PC-3 (cell line): ENCODE measurements at regions of chr18 and their contacts with region 1.

Region 1: GRCh38 chr18:3511922-3512372 is 62.0 kb downstream of the TGIF1 start:
- DNase-seq: peak; percentile 82
- ATAC-seq: peak; percentile 70
- H3K4me3 ChIP-seq: no peak overlapping the region
- H3K27ac ChIP-seq: no peak overlapping the region
- H3K4me1 ChIP-seq: peaks cover 20% of the 10 kb centered on the region
- H3K27me3 ChIP-seq: no peaks in the 10 kb centered on the region
- CTCF ChIP-seq: no peak

Region 2: DNA sequence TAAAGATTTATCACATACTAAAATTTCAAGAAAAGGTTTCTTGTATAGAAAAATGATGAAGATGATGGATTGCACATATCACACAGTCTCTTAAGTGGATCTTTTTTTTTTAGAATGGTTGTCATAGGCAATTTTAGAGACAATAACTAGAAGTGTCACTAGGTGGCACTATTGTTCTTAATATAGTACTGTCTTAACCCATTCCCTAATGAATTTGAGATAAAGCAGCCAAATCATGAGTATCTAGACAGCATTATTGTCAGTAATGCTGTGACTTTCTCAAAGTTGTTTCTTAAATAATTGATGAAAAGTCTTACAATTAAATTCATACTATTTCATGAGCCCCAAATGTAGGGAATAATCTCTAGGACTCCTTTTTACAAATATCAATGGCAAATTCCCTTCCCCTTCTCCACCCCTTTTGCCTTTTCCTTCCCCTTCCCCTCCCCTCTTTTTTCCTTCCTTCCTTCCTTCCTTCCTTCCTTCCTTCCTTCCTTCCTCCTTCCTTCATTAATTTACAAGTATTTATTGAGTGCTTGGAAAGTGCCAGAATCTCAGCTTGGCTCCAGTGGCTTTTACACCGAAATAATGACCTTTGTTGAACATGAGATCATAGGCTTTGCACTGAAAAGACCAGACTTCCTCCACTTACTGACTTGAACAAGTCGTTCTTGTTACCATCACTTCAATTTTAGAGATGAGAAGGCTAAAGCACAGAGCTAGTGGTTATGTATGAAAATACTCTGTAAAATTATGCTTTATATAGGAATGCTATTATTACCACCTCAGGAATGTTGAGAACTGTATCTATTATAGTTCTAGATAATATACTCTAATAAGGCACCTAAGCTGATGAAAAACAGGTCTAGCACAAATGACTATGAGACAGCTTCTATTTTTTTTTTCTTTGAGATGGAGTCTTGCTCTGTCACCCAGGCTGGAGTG is 230.2 kb before region 1 on chr18:
- CTCF ChIA-PET with region 1: no interaction called
- POLR2A ChIA-PET with region 1: no interaction called
- intact Hi-C with region 1: loop called (anchors 5 kb)
- DNase-seq: peak; percentile 96
- ATAC-seq: peak; percentile 64
- H3K4me3 ChIP-seq: no peak overlapping the region
- H3K27ac ChIP-seq: no peak overlapping the region
- H3K4me1 ChIP-seq: peaks cover 27% of the 10 kb centered on the region
- H3K27me3 ChIP-seq: no peaks in the 10 kb centered on the region
- CTCF ChIP-seq: peak; percentile 87

Region 3: DNA sequence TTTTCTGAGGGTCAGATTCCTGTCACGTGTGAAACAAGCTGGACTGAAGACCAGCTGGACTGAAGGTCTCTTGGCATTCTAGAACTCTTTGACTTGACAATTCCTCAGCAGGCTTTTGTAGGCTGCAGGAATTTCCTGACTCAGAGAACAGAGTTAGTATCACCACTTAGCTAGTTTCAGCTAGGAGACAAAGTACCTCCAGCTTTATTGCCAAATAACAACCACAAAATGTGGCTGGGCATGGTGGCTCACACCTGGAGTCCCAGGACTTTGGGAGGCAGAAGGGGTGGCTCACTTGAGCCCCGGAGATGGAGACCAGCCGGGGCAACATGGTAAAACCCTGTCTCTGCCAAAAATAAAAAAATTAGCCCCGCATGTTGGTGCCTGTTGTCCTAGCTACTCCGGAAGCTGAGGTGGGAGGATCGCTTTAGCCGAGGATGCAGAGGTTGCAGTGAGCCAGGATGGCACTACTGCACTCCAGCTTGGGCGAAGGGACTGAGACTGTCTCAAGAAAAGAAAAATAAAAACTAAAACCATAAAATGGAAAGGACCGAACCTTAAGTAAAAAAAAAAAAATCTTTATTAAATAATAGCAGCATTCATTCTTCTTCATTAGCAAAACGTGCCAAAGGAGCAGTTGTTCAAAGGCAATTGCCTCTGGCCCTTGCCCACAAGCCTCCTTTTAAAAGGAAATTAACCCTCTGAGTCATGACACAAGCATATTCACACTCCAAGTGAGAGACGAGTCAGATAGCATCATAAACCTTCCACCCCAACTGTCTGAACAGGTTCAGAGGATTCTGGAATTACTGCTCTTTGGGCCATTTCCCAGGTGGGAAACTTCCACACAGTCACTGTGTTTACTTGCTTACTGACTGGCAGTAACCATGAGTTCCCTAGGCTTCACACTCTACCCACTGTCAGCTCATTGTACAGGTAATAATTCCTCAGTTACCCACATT is 161.1 kb before region 1 on chr18:
- CTCF ChIA-PET with region 1: no interaction called
- POLR2A ChIA-PET with region 1: no interaction called
- intact Hi-C with region 1: no loop called
- DNase-seq: peak; percentile 76
- ATAC-seq: peak; percentile 94
- H3K4me3 ChIP-seq: no peak overlapping the region
- H3K27ac ChIP-seq: no peak overlapping the region
- H3K4me1 ChIP-seq: peaks cover 10% of the 10 kb centered on the region
- H3K27me3 ChIP-seq: no peaks in the 10 kb centered on the region
- CTCF ChIP-seq: no peak

Region 4: GRCh38 chr18:3392467-3392855 is 119.5 kb before region 1 on chr18:
- CTCF ChIA-PET with region 1: no interaction called
- POLR2A ChIA-PET with region 1: interaction called, 11 read pairs
- intact Hi-C with region 1: no loop called
- DNase-seq: no peak
- ATAC-seq: no peak
- H3K4me3 ChIP-seq: no peak overlapping the region
- H3K27ac ChIP-seq: no peak overlapping the region
- H3K4me1 ChIP-seq: peaks cover 18% of the 10 kb centered on the region
- H3K27me3 ChIP-seq: no peaks in the 10 kb centered on the region
- CTCF ChIP-seq: no peak

Region 5: GRCh38 chr18:3424280-3424890 is 87.6 kb before region 1 on chr18:
- CTCF ChIA-PET with region 1: no interaction called
- POLR2A ChIA-PET with region 1: no interaction called
- intact Hi-C with region 1: no loop called
- DNase-seq: no peak
- ATAC-seq: no peak
- H3K4me3 ChIP-seq: no peak overlapping the region
- H3K27ac ChIP-seq: no peak overlapping the region
- H3K4me1 ChIP-seq: no peaks in the 10 kb centered on the region
- H3K27me3 ChIP-seq: no peaks in the 10 kb centered on the region
- CTCF ChIP-seq: no peak

Region 6: GRCh38 chr18:3593904-3594661 is 82.1 kb after region 1 on chr18:
- CTCF ChIA-PET with region 1: interaction called, 3 read pairs
- POLR2A ChIA-PET with region 1: no interaction called
- intact Hi-C with region 1: loop called (anchors 2 kb)
- DNase-seq: peak; percentile 94
- ATAC-seq: peak; percentile 50
- H3K4me3 ChIP-seq: peak overlapping the region; percentile 60
- H3K27ac ChIP-seq: peak overlapping the region; percentile 99
- H3K4me1 ChIP-seq: peaks cover 45% of the 10 kb centered on the region
- H3K27me3 ChIP-seq: no peaks in the 10 kb centered on the region
- CTCF ChIP-seq: peak; percentile 81

Region 7: GRCh38 chr18:3623769-3624545 is 112.0 kb after region 1 on chr18:
- CTCF ChIA-PET with region 1: no interaction called
- POLR2A ChIA-PET with region 1: no interaction called
- intact Hi-C with region 1: loop called (anchors 1 kb)
- DNase-seq: peak; percentile 98
- ATAC-seq: peak; percentile 81
- H3K4me3 ChIP-seq: peak overlapping the region; percentile 53
- H3K27ac ChIP-seq: peak overlapping the region; percentile 98
- H3K4me1 ChIP-seq: peaks cover 50% of the 10 kb centered on the region
- H3K27me3 ChIP-seq: no peaks in the 10 kb centered on the region
- CTCF ChIP-seq: no peak

Region 8: DNA sequence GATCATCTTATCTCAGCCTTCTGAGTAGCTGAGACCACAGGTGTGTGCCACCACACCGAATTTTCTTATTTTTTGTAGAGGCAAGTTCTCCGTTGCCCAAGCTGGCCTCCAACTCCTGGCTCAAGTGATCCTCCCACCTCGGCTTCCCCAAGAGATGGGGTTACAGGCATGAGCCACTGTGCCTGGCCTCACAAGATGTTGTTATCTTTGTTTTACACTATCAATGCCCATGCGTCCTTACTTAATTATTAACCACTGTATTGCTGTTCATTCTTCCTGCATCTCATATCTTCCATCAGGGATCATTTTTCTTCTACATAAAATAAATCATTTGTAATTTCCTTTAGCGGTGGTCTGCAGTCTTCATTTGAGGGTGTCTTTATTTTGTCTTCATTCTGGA is 119.9 kb after region 1 on chr18:
- CTCF ChIA-PET with region 1: no interaction called
- POLR2A ChIA-PET with region 1: interaction called, 20 read pairs
- intact Hi-C with region 1: no loop called
- DNase-seq: no peak
- ATAC-seq: no peak
- H3K4me3 ChIP-seq: no peak overlapping the region
- H3K27ac ChIP-seq: no peak overlapping the region
- H3K4me1 ChIP-seq: peaks cover 6% of the 10 kb centered on the region
- H3K27me3 ChIP-seq: no peaks in the 10 kb centered on the region
- CTCF ChIP-seq: no peak